Dorsolateral prefrontal cortex (tissue), 120 donors: ENCODE measurements at regions of chr9 and their contacts with region 1.

Region 1: GRCh38 chr9:88991066-88992034 is at the start of gene S1PR3:
- DNase-seq: no peak
- H3K4me3 ChIP-seq: peak within 1 kb of the TSS; percentile 31 to 78 (median 64)
- H3K27ac ChIP-seq: peak within 1 kb of the TSS in 13 of 59 donors; percentile 12 to 66 (median 39)
- H3K27me3 ChIP-seq: peaks cover 0 to 39% (median 9%) of the 10 kb centered on the region in 45 donors
- CTCF ChIP-seq: peak in 1 of 56 donors; percentile 16
- total RNA-seq, gene S1PR3: 3.0 to 25.8 (median 8.4) TPM

Region 2: GRCh38 chr9:88076286-88077090 is 914.9 kb before region 1 on chr9:
- intact Hi-C with region 1: loop called in 1 of 2 experiments (anchors 10 kb)
- DNase-seq: peak; percentile 39 to 78 (median 67)
- H3K4me3 ChIP-seq: peak overlapping the region; percentile 51 to 84 (median 68)
- H3K27ac ChIP-seq: peak overlapping the region in 58 of 59 donors; percentile 41 to 96 (median 86)
- H3K27me3 ChIP-seq: no peaks in the 10 kb centered on the region
- CTCF ChIP-seq: peak in 21 of 56 donors; percentile 3 to 30 (median 12)

Region 3: GRCh38 chr9:89295400-89295799 is 304.1 kb after region 1 on chr9:
- intact Hi-C with region 1: no loop called
- DNase-seq: no peak
- H3K4me3 ChIP-seq: no peak overlapping the region
- H3K27ac ChIP-seq: no peak overlapping the region
- H3K27me3 ChIP-seq: no peaks in the 10 kb centered on the region
- CTCF ChIP-seq: no peak

Region 4: DNA sequence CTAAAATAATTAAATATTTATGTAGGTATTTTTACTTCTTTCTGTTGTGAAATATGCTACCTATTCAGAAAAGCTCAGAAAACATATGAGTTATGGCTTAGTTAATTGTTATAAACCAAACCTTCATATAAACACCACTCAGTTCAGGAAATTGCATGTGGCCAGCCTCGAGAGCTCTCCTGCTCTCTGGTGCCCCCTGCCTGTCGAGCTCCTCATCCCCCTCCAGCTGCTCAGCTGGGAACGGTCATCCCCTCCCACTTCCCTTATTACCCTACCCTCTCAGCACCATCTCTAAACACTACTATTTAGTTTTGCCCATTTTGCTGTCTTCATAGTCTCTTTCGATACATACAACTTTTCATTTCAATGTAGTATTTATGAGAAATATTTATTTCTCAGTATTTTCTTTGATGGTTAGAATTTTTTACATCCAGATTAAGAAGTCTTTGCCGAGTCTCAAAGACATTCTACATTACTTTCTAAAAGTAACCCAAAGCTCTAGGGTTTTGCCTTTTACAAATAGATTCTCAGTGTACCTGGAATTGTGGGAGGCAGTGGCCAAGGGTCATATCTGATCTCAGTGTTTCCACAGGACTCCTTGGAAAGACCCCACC is 557.8 kb after region 1 on chr9:
- intact Hi-C with region 1: no loop called
- DNase-seq: peak in 9 of 10 donors; percentile 61 to 85 (median 75)
- H3K4me3 ChIP-seq: no peak overlapping the region
- H3K27ac ChIP-seq: peak overlapping the region in 30 of 59 donors; percentile 1 to 77 (median 50)
- H3K27me3 ChIP-seq: no peaks in the 10 kb centered on the region
- CTCF ChIP-seq: peak; percentile 58 to 100 (median 94)